PC-9 (cell line): ENCODE measurements at regions of chr10 and their contacts with region 1.

Region 1: GRCh38 chr10:68082872-68083271 is 7.8 kb upstream of the HERC4 start:
- DNase-seq: no peak
- H3K4me3 ChIP-seq: no peak overlapping the region
- H3K27ac ChIP-seq: peak overlapping the region; percentile 10; the same call in 1 of the 2 replicates
- H3K4me1 ChIP-seq: peaks cover 53% of the 10 kb centered on the region
- H3K27me3 ChIP-seq: no peaks in the 10 kb centered on the region
- CTCF ChIP-seq: peak; percentile 80

Region 2: DNA sequence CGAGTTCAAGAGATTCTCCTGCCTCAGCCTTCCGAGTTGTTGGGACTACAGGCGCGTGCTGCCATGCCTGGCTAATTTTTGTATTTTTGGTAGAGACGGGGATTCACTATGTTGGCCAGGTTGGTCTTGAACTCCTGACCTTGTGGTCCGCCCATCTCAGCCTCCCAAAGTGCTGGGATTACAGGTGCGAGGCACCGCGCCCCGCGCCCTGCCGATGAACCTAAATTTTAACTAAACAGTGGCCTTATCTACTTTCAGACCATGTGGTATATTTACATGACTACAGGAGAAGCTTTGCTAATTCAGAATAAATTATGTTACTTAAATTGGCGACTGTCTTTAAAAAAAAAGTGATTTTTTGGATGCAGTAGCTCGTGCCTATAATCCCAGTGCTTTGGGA is 189.2 kb before region 1 on chr10:
- CTCF ChIA-PET with region 1: interaction called, 10 read pairs
- POLR2A ChIA-PET with region 1: no interaction called
- intact Hi-C with region 1: no loop called
- DNase-seq: no peak
- H3K4me3 ChIP-seq: no peak overlapping the region
- H3K27ac ChIP-seq: no peak overlapping the region
- H3K4me1 ChIP-seq: no peaks in the 10 kb centered on the region
- H3K27me3 ChIP-seq: no peaks in the 10 kb centered on the region
- CTCF ChIP-seq: no peak

Region 3: DNA sequence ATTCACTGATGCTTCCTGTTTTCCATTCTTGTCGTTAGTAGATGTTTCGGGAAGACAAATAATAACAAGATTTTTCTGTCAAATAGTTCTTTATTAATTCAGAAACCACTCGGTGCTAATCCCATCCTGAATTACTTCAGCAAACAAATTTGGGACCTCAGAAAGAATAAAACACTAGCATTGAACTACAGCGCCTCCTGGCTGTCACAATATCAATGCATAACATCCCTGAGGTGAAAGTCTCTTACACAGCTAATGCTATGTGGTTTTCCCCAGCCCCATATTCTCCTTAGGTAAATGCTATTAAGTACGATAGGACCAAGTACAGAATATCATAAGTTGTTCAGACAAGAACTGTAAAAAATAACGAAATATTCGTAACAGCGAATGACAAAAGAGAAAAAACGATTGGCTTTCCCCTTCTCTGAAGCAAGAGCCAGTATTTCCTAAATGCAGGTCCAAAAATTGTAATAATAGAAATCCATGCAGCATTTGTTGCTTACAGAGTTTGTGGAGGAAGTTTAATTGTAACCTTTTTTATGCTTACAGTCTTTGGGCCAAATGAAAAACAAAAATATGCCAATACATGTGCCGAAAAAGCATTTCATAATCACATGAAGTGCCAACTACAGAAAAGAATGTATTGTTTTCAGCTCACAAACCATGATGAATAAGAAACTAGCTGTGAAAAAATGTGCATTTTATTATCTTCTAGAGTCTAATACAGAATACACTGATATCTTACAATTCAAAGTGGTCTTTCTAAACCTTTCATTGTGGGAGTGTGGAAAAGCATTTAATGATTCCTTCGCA is 73.7 kb after region 1 on chr10:
- CTCF ChIA-PET with region 1: interaction called, 3 read pairs
- POLR2A ChIA-PET with region 1: interaction called, 3 read pairs
- intact Hi-C with region 1: loop called (anchors 1 kb)
- DNase-seq: peak; percentile 36 to 40
- H3K4me3 ChIP-seq: no peak overlapping the region
- H3K27ac ChIP-seq: no peak overlapping the region
- H3K4me1 ChIP-seq: peaks cover 62% of the 10 kb centered on the region
- H3K27me3 ChIP-seq: no peaks in the 10 kb centered on the region
- CTCF ChIP-seq: peak; percentile 76

Region 4: DNA sequence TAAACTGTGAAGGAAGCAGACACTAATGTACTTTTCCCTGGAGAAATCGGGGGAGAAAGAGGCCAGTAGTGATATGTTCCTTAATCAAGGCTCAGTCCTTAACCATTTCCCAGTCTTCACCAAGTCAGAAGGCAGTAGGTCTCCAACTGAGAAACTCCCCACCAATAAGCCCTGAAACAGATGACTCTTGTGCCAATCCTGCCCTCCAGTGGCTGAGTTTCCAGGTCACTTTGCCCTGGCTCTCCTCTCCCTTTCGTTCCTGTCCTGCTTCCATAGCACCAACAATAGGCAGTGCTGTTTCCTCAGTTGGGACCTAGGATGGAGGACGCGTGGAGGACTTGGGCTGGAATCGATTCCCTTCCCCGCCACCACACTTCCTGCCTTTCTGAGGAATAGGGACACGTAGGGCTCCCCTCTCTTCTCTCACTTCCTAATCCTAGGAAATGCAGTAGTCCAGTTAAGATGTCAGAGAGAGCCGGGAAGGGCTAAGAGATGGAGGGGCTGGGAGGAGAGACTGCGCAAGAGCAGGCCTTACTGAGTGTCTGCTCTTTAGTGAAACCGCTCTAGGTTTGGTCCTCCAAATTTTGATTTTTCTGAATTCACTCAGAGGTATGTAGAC is 125.7 kb after region 1 on chr10:
- CTCF ChIA-PET with region 1: interaction called, 6 read pairs
- POLR2A ChIA-PET with region 1: interaction called, 5 read pairs
- intact Hi-C with region 1: loop called (anchors 1 kb)
- DNase-seq: peak; percentile 63 to 78
- H3K4me3 ChIP-seq: no peak overlapping the region
- H3K27ac ChIP-seq: no peak overlapping the region
- H3K4me1 ChIP-seq: peaks cover 7% of the 10 kb centered on the region
- H3K27me3 ChIP-seq: no peaks in the 10 kb centered on the region
- CTCF ChIP-seq: peak; percentile 82

Region 5: DNA sequence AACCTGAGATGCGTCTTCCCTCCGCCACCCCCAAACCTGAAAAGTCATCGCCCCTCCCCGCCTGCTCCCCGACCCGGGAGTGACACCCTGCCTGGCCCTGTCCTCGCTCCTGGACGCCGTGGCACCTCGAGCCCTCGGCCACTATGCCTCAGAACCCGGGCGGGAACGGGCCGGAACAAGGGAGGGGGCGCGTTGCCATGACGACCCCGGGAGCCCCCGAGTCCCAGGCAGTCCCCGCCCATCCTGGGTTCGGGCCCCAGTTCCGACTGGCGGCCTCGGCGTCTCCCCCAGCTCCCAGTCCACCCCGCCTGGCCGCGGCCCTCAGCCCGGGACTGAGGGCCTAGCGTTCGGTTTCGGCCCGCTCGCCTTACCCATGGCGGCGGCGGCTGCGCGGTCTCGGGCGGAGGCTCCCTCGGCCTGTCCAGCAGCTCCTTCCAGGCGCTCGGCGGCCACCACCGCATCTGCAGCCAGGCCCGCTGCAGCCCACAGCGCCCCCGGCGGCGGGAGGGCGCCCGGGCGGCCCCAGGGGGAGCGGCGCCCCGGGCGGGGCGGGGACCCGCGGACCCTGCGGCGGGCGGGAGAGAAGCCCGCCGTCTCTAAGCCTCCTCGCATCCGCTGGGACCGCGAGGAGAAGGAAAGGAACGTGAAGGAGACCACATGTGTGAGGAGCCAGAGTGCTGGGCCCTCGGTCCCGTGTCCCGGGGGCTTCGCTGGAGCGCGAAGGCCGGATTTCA is 324.1 kb after region 1 on chr10 and contains the start of gene RUFY2:
- CTCF ChIA-PET with region 1: no interaction called
- POLR2A ChIA-PET with region 1: no interaction called
- intact Hi-C with region 1: no loop called
- DNase-seq: peak; percentile 45 to 88
- H3K4me3 ChIP-seq: peak within 1 kb of the TSS; percentile 66
- H3K27ac ChIP-seq: peak within 1 kb of the TSS; percentile 60
- H3K4me1 ChIP-seq: peaks cover 9% of the 10 kb centered on the region
- H3K27me3 ChIP-seq: no peaks in the 10 kb centered on the region
- CTCF ChIP-seq: peak; percentile 53
- total RNA-seq, gene RUFY2: 26.7 and 30.5 TPM in 2 replicates